ENCODE measurements at regions of chr22 and their contacts with region 1.

Region 1: DNA sequence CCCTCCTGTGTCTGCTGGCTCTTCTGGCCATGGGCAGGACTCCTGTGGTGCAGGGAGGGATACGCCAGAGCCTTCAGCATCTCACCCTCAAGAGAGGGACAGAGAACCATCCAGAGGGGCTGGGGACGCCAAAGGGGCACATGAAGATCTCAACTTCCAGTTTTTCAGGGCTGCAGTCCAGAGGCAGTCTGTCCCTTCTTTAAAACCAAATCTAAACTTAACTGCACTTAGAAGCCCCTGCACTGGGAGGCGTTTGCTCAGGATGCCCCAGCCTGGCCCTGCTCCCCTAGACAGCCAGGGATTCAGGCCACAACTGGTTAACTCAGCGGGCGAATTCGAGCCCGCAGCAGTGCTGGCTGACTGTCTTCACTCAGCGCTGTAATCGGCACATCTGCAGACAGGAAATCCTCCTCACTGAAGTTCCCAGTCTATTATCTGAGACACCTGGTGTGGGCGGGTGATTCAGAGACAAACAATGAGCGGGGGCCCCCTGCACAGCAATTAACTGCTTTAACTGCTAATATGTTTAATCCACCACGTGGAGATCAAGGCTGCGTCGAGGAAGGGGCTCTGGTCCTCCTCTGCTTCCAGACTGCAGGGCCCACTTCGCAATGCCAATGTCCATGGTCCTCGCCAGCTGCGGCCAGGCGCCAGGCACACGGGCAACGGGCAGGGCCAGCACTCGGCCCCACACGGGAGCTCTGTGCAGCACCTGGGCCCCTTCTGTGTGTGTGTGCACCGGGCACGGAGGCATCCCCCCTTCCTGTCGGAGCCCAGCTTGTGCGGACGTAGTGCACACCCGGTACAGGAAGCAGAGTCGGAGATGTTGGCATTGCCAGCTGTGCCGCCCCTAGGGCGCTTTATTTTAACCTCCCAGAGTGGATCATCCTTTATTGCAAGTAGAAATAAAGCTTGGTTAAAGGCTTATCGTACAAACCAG is 36.9 kb upstream of the GNB1L start:
- DNase-seq: peak; percentile 58 to 89 (median 78)
- ATAC-seq: peak; percentile 79 to 88
- H3K4me3 Mint-ChIP-seq: peak overlapping the region; percentile 78 to 91 (median 86)
- H3K27ac Mint-ChIP-seq: peak overlapping the region; percentile 96 to 100 (median 99)
- H3K4me1 Mint-ChIP-seq: peaks cover 43 to 92% (median 84%) of the 10 kb centered on the region in 4 donors
- H3K27me3 Mint-ChIP-seq: no peaks in the 10 kb centered on the region

Region 2: DNA sequence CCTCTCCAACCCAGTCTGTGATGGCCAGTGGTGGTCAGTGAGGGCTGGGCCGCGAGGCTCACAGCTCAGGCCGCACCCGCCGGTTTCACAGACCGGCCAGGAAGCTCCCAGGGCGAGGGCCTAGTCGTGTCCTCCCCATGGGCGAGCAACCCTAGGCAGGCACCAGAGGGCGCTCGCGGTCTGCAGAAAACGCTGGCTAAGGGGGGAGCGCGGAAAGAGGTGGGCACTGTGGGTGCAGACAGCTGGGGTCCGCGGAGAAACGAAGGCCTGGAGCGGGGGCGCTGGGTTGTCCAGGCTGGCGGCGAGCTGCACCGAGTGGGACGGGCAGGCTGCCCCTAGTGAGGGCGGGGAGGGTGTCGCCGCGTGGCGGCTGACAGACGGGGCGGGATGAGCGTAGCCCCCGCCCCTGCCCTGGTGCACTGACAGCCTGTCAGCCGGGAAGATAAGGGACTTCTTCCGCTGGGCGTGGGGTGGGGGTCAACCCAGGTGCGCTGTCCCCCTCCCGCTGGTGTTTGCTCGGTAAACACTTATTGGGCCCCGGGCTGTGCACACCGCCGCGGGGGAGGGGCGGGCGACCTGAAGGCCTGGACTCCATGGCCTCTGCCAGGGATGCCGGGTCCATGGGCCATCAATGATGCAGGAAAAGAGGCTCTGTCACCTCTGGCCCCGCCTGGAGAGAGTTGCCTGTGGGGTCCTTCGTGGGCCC is 160.8 kb before region 1 on chr22:
- POLR2A ChIA-PET with region 1: interaction called, 11 read pairs
- DNase-seq: peak; percentile 70 to 93 (median 86)
- ATAC-seq: peak; percentile 94 to 99
- H3K4me3 Mint-ChIP-seq: peak overlapping the region; percentile 77 to 93 (median 86)
- H3K27ac Mint-ChIP-seq: peak overlapping the region in 5 of 10 donors; percentile 32 to 88 (median 77)
- H3K4me1 Mint-ChIP-seq: peaks cover 0 to 6% (median 2%) of the 10 kb centered on the region in 4 donors
- H3K27me3 Mint-ChIP-seq: peaks cover 0 to 7% (median 0%) of the 10 kb centered on the region in 5 donors

Region 3: DNA sequence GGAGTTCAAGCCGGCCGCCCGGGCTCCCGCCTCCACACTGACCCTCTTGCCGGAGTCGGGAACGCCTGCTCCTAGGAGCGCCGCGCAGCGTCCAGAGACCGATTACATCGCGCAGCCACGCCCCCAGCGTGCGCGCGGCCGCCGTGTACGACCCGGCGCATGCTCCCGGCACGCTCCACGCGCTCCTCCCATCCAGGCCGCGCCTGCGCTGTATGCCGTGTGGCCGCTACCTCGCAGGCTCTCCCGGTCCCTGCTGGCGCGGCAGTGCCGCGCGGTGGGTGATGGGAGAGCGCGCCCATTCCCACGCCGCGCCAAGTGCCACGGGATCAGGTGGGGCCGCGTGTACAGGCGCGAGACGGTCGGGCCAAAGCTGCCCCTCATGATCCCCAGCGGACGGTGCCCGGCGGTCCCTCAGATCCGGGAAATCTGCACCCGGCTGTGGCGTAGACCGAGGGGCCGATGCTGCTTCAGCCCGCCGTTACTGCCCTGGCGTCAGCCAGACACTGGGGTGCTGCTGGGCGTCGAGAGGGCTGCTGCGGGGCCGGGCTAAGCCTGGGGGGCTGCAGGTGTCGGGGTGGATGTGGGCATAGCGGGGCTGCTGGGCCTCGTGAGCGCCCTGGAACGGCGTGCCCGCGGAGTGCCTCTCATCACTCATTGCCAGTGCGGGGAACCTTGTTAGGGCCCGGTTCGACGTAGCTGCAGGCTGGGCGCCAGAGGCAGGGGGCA is 36.6 kb before region 1 on chr22 and contains the starts of genes GNB1L and RTL10:
- POLR2A ChIA-PET with region 1: interaction called, 120 read pairs
- DNase-seq: peak; percentile 89 to 97 (median 94)
- ATAC-seq: peak; percentile 87 to 91
- H3K4me3 Mint-ChIP-seq: peak within 1 kb of the TSS; percentile 92 to 99 (median 96)
- H3K27ac Mint-ChIP-seq: peak within 1 kb of the TSS; percentile 92 to 99 (median 95)
- H3K4me1 Mint-ChIP-seq: peaks cover 24 to 66% (median 59%) of the 10 kb centered on the region in 4 donors
- H3K27me3 Mint-ChIP-seq: no peaks in the 10 kb centered on the region
- polyA plus RNA-seq, gene GNB1L: 12.2 to 18.7 (median 17.3) TPM
- polyA plus RNA-seq, gene RTL10: 7.0 to 14.3 (median 13.4) TPM

Region 4: GRCh38 chr22:19874307-19875060 is 17.1 kb before region 1 on chr22:
- POLR2A ChIA-PET with region 1: interaction called, 24 read pairs
- DNase-seq: peak in 6 of 10 donors; percentile 14 to 69 (median 41)
- ATAC-seq: peak; percentile 89 to 92
- H3K4me3 Mint-ChIP-seq: peak overlapping the region in 8 of 10 donors; percentile 8 to 68 (median 52)
- H3K27ac Mint-ChIP-seq: peak overlapping the region; percentile 35 to 87 (median 74)
- H3K4me1 Mint-ChIP-seq: peaks cover 0 to 19% (median 6%) of the 10 kb centered on the region in 4 donors
- H3K27me3 Mint-ChIP-seq: no peaks in the 10 kb centered on the region

Region 5: DNA sequence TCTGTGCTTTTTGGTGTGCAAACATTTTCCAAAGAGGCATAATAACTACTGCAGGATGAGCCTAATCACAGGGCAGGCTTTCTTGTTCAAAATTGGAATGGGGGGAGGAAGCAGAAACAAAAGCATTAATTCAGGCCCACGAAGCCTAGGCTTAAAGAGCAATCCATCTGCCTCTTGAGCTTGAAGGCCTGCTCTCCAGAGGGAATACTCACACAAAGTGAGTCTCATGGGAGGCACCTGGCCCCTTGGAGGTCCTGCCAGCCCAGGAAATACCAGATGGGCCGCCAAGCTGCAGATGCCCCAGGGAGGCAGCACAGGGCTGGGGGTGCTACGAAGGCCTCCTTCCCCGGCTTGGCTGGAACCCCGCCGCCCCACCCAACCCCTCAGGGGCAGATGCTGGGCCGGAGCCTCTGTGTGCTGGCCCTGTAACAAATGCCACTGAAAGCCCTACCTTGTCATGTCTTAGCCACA is 10.7 kb after region 1 on chr22:
- POLR2A ChIA-PET with region 1: interaction called, 14 read pairs
- DNase-seq: no peak
- ATAC-seq: no peak
- H3K4me3 Mint-ChIP-seq: no peak overlapping the region
- H3K27ac Mint-ChIP-seq: peak overlapping the region in 1 of 10 donors; percentile 32
- H3K4me1 Mint-ChIP-seq: peaks cover 2 to 9% (median 5%) of the 10 kb centered on the region in 4 donors
- H3K27me3 Mint-ChIP-seq: no peaks in the 10 kb centered on the region

Region 6: GRCh38 chr22:20061481-20061861 is 169.9 kb after region 1 on chr22:
- POLR2A ChIA-PET with region 1: no interaction called
- DNase-seq: no peak
- ATAC-seq: no peak
- H3K4me3 Mint-ChIP-seq: no peak overlapping the region
- H3K27ac Mint-ChIP-seq: peak overlapping the region in 1 of 10 donors; percentile 57
- H3K4me1 Mint-ChIP-seq: peaks cover 0 to 13% (median 5%) of the 10 kb centered on the region in 4 donors
- H3K27me3 Mint-ChIP-seq: no peaks in the 10 kb centered on the region